Activated CD8-positive, alpha-beta T cell treated with anti-CD3 and anti-CD28 coated beads for 36 hours (primary cell): ENCODE measurements at regions of chr2 and their contacts with region 1.

Region 1: DNA sequence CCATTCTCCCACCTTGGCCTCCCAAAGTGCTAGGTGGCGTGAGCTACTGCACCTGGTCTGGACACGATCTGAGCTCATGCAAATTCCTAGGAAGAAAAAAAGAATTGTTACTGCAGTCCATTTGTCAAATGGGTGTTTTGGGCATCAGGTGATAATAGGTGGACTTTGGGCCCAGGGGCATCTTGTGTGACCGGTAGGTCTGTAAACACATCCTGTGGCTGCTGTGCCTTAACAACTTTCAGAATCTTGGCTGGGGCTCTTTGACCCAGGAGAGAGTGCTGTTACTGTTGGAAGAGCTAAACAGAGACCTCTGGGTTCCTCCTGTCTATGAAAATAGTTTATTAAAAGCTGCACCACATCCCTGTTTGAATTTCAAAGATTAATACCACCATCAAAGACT is 35.0 kb upstream of the TFCP2L1 start:
- DNase-seq: no peak
- ATAC-seq: no peak
- H3K4me3 Mint-ChIP-seq: no peak overlapping the region
- H3K27ac Mint-ChIP-seq: no peak overlapping the region
- H3K4me1 Mint-ChIP-seq: no peaks in the 10 kb centered on the region
- H3K27me3 Mint-ChIP-seq: peaks cover 3% of the 10 kb centered on the region
- CTCF ChIP-seq: no peak

Region 2: GRCh38 chr2:121088251-121089165 is 231.4 kb before region 1 on chr2:
- CTCF ChIA-PET with region 1: no interaction called
- POLR2A ChIA-PET with region 1: no interaction called
- intact Hi-C with region 1: loop called (anchors 5 kb)
- DNase-seq: no peak
- ATAC-seq: no peak
- H3K4me3 Mint-ChIP-seq: no peak overlapping the region
- H3K27ac Mint-ChIP-seq: no peak overlapping the region
- H3K4me1 Mint-ChIP-seq: no peaks in the 10 kb centered on the region
- H3K27me3 Mint-ChIP-seq: peaks cover 5% of the 10 kb centered on the region
- CTCF ChIP-seq: no peak

Region 3: DNA sequence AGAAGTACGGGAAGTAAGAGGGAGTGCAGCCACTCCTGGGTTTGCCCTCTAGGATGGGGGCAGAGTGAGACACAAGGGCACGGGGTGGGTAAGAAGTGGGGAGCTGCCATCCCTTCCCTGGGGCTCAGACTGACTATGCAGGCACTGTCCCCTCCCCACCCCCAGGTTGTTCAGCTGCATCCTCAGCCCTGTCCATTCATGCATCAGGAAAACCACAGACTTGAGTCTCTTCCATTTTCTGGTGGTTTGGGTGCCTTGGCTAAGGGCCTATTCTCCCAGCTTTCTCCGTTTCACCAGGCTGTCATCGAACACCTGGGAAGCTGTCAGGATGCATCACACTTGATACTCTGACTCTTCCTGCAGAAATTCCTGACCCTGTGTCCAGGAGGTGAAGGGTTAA is 146.8 kb before region 1 on chr2:
- CTCF ChIA-PET with region 1: no interaction called
- POLR2A ChIA-PET with region 1: no interaction called
- intact Hi-C with region 1: no loop called
- DNase-seq: no peak
- ATAC-seq: no peak
- H3K4me3 Mint-ChIP-seq: no peak overlapping the region
- H3K27ac Mint-ChIP-seq: no peak overlapping the region
- H3K4me1 Mint-ChIP-seq: no peaks in the 10 kb centered on the region
- H3K27me3 Mint-ChIP-seq: peaks cover 13% of the 10 kb centered on the region
- CTCF ChIP-seq: no peak

Region 4: GRCh38 chr2:121237980-121238665 is 81.8 kb before region 1 on chr2:
- CTCF ChIA-PET with region 1: no interaction called
- POLR2A ChIA-PET with region 1: no interaction called
- intact Hi-C with region 1: no loop called
- DNase-seq: no peak
- ATAC-seq: no peak
- H3K4me3 Mint-ChIP-seq: no peak overlapping the region
- H3K27ac Mint-ChIP-seq: no peak overlapping the region
- H3K4me1 Mint-ChIP-seq: no peaks in the 10 kb centered on the region
- H3K27me3 Mint-ChIP-seq: no peaks in the 10 kb centered on the region
- CTCF ChIP-seq: no peak

Region 5: DNA sequence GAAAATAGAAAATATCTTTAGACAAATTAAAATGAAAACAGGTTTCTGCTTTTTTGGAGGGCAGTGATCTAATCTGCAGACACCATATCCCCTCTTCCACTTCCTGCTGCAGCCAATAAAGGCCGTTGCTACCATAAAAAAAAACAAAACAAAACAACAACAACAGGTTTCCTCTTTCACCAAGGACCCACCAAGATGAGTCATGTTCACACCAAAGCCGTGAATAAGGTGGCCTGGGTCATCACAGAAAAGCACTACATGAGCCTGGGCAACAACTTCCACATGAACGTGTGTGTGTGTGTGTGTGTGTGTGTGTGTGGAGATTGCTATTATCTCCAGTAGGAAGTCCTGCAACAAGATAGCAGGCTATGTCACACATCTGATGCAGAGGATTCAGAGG is 10.2 kb before region 1 on chr2:
- CTCF ChIA-PET with region 1: no interaction called
- POLR2A ChIA-PET with region 1: no interaction called
- intact Hi-C with region 1: no loop called
- DNase-seq: no peak
- ATAC-seq: no peak
- H3K4me3 Mint-ChIP-seq: no peak overlapping the region
- H3K27ac Mint-ChIP-seq: no peak overlapping the region
- H3K4me1 Mint-ChIP-seq: no peaks in the 10 kb centered on the region
- H3K27me3 Mint-ChIP-seq: peaks cover 15% of the 10 kb centered on the region
- CTCF ChIP-seq: no peak

Region 6: DNA sequence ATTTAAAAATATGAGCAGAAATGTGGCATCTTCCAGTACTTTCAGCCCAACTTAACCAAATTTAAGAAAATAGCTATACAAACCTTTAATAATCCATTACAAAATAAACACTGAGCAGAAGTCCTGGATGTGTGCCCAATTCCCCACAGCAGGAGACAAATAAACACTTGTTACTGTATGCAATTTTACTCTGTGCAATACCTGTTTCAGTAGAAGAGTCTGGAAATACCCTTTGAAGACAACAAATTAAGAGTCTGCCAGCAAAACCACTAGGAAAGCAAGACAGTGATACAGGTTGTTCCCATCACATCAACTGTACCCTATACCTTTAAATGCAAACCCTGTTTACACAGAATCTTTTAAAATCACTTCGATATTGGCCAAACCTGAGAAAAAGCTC is 169.3 kb after region 1 on chr2:
- CTCF ChIA-PET with region 1: no interaction called
- POLR2A ChIA-PET with region 1: no interaction called
- intact Hi-C with region 1: no loop called
- DNase-seq: no peak
- ATAC-seq: no peak
- H3K4me3 Mint-ChIP-seq: no peak overlapping the region
- H3K27ac Mint-ChIP-seq: no peak overlapping the region
- H3K4me1 Mint-ChIP-seq: peaks cover 44% of the 10 kb centered on the region
- H3K27me3 Mint-ChIP-seq: no peaks in the 10 kb centered on the region
- CTCF ChIP-seq: no peak